Right ventricle myocardium superior (tissue), 1 donor: ENCODE measurements at regions of chr1 and their contacts with region 1.

Region 1: DNA sequence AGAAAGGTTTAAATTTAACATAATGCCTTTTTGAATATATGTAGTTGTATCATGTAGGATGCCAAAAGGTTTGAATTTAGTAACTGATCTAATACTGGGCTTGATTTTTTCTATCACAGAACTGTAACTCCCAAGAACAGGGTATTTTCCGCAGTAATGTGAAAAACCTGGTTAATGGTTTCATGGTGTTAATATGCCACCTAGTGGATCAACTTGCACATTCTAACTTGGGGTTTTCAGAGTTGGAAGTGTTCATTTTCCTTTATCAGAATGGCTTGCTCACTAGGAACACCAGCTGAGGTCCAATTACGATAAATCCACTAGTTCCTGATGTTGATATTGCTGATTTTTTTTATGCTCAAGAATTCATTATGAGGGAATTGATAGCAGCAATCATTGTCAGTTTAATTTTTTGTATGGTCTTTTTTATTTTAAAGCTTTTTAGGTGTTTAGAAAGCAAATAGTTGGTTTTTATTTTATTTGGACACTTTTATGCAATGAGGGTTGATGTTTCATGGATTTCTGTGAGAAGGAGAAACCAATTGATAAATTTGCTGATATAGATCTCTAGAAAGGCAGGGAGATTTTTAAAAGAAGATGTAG is 157.2 kb downstream of the PLA2G4A start:
- DNase-seq: no peak
- ATAC-seq: peak; percentile 81

Region 2: DNA sequence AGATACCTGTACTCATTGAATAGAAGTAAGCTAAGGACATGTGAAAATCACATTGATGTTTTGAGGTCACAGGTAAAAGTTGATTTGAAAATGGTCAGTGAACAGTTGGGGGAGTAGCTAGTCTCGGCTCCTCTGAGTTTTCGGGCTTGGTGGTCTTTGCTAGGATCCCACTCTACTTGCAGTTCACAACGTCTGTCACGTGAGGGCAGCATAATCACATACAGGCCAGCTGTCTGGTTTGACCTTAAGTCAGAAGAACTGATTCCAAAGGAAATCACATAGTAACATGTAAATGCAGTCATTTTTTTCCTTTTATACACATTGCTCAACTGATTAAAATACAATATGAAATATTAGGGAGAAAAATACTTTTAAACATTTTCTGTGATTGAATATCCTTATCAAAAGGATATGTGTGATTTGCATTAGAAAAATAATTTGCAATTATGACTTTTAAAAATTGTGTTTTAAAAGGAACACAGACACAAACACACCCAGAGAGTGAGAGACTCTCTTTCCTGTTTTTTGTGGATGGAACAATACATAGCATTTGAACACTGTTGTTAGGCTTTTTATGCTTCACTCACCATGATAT is 503.2 kb before region 1 on chr1:
- intact Hi-C with region 1: loop called (anchors 5 kb)
- DNase-seq: peak; percentile 43
- ATAC-seq: peak; percentile 81

Region 3: DNA sequence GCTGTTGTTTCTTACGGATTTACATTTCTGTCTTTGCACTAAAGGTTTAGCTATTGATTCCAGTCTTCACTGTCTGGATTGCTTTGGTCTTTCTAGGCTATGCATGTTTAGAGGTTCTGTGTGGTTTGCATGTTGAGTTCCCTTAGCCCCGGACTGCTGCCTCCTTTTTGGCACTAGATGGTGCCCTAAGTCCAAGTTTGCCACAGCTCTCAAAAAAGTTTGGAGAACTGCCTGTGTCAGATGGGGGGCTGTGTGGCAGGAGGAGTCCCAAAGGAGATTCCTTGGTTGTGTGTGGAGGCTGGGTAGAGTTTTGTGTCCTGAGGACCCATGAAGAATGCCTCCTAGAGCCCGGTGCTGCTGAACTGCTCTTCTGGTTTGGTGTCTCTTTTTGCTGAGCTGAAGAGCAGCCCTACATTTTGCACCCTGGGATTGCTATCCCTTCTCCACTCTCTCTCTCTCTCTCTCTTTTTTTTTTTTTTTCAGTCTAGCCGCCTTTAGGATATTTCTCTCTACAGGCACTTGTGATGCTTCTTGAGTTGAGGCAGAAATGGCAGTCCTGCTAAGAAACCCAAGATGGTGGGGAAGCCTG is 380.1 kb before region 1 on chr1:
- intact Hi-C with region 1: loop called (anchors 5 kb)
- DNase-seq: peak; percentile 48
- ATAC-seq: peak; percentile 86

Region 4: DNA sequence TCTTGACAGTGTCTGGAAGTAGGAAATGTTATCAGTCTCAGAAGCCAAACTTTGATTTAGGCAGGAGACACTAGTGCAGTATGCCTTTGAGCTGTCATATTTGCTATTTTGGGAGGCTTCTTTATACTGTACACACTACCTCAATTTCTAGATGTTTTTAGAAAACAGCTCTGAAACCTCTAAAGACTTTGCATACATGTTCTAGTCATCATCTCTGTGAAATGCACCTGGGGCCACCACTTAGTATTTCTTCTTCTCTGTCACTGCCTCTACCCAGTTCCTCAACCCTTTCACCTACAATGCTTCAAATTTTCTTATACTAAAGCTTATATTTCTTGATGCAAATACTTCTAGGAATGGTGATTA is 186.3 kb before region 1 on chr1:
- intact Hi-C with region 1: no loop called
- DNase-seq: no peak
- ATAC-seq: no peak

Region 5: DNA sequence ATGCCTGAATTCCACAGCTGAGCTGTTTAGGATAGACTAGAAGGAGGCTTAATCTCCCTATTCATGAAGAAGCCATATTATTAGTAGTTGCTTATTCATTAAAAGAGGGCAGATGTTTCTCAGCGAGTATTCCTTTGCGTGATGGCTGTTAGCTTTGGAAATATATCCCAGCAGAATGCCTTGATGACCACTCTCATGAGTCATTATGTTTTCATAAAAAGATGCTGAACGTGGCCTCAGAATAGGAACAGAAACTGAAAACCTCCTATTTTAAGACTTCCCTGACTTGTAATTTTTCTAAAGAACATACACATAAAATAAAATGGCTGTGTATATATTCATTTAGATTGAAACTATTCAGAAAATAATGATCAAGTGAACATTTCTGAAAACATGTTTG is 166.9 kb before region 1 on chr1:
- intact Hi-C with region 1: no loop called
- DNase-seq: no peak
- ATAC-seq: no peak

Region 6: GRCh38 chr1:186930238-186930637 is 55.8 kb before region 1 on chr1:
- intact Hi-C with region 1: no loop called
- DNase-seq: no peak
- ATAC-seq: no peak